ENCODE measurements at regions of chr3 and their contacts with region 1.

Region 1: DNA sequence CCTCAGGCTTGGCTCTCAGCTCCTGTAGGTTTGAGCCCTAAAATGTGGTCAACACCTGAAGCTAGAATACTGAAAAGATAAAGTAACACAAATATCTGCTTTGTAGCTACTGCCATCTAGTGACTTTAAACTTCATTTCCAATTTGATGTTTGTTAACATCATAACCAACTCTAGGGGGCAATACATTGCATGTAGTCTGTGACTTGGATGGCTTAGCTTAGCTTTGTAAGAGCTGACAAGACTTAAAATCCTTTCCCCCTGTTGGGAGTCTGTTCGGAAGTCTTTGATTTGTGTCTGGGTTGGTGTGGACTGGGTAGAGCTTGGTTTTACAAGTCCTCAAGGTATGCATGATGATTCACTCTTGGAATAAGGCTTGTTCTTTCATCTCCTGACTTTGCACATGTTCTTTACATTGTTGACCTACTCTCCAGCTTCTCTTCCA is 51.7 kb downstream of the SCN11A start:
- H3K4me3 Mint-ChIP-seq: no peak overlapping the region
- H3K27ac Mint-ChIP-seq: no peak overlapping the region
- H3K4me1 Mint-ChIP-seq: no peaks in the 10 kb centered on the region
- H3K27me3 Mint-ChIP-seq: no peaks in the 10 kb centered on the region

Region 2: GRCh38 chr3:38521391-38521987 is 478.5 kb before region 1 on chr3:
- intact Hi-C with region 1: loop called (anchors 1 kb)
- H3K4me3 Mint-ChIP-seq: no peak overlapping the region
- H3K27ac Mint-ChIP-seq: no peak overlapping the region
- H3K4me1 Mint-ChIP-seq: no peaks in the 10 kb centered on the region
- H3K27me3 Mint-ChIP-seq: no peaks in the 10 kb centered on the region

Region 3: GRCh38 chr3:38755130-38755529 is 244.9 kb before region 1 on chr3:
- intact Hi-C with region 1: no loop called
- H3K4me3 Mint-ChIP-seq: no peak overlapping the region
- H3K27ac Mint-ChIP-seq: no peak overlapping the region
- H3K4me1 Mint-ChIP-seq: no peaks in the 10 kb centered on the region
- H3K27me3 Mint-ChIP-seq: no peaks in the 10 kb centered on the region

Region 4: GRCh38 chr3:39038165-39038564 is 38.1 kb after region 1 on chr3:
- intact Hi-C with region 1: loop called (anchors 5 kb)
- H3K4me3 Mint-ChIP-seq: no peak overlapping the region
- H3K27ac Mint-ChIP-seq: no peak overlapping the region
- H3K4me1 Mint-ChIP-seq: peaks cover 8% of the 10 kb centered on the region
- H3K27me3 Mint-ChIP-seq: peaks cover 1% of the 10 kb centered on the region

Region 5: DNA sequence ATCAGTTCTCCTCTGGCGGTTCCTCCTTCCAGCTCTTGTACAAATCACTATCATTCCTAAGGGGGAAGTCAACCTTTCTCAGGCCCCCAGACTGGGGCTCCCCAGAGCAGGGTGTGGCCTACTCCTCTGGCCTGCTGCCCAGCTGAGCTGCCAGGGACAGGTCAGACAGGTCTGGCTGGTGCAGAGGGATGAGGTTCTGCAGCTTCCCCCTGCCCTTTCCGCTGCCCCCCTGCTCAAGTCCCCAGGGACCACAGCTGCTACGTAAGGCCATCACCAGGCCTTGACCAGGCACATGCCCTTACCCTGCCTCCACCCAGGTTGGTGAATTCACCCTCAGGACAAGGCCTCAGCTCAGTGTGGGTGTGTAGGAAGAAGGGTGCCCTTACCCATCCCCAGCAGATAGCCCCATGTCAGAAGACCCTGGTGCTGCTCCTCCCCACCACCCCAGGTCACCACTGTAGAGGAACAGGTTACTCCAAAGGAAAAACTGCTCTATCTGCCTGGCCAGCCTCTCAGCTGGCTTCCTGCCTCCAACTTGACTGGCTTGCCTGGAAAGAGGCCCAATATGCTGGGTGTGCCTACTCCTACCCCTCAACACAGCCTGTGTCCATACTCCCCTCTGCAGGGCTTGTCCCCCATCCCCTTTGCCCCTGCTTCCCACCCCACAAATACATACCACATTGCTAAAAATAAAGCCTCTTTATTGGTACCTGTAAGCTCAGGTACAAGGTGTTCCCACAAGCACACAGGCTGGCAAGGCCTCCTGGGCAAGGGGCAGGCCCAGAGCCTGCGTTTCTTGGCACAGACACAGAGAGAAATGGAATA is 141.4 kb after region 1 on chr3:
- intact Hi-C with region 1: no loop called
- H3K4me3 Mint-ChIP-seq: no peak overlapping the region
- H3K27ac Mint-ChIP-seq: peak overlapping the region; percentile 69
- H3K4me1 Mint-ChIP-seq: peaks cover 85% of the 10 kb centered on the region
- H3K27me3 Mint-ChIP-seq: no peaks in the 10 kb centered on the region